Cardiac septum (tissue), 1 donor: ENCODE measurements at regions of chr1 and their contacts with region 1.

Region 1: GRCh38 chr1:204806943-204807687 is 63.5 kb upstream of the NFASC start:
- DNase-seq: peak; percentile 89

Region 2: GRCh38 chr1:204431310-204432165 is 375.6 kb before region 1 on chr1:
- intact Hi-C with region 1: loop called (anchors 10 kb)
- DNase-seq: peak; percentile 87

Region 3: DNA sequence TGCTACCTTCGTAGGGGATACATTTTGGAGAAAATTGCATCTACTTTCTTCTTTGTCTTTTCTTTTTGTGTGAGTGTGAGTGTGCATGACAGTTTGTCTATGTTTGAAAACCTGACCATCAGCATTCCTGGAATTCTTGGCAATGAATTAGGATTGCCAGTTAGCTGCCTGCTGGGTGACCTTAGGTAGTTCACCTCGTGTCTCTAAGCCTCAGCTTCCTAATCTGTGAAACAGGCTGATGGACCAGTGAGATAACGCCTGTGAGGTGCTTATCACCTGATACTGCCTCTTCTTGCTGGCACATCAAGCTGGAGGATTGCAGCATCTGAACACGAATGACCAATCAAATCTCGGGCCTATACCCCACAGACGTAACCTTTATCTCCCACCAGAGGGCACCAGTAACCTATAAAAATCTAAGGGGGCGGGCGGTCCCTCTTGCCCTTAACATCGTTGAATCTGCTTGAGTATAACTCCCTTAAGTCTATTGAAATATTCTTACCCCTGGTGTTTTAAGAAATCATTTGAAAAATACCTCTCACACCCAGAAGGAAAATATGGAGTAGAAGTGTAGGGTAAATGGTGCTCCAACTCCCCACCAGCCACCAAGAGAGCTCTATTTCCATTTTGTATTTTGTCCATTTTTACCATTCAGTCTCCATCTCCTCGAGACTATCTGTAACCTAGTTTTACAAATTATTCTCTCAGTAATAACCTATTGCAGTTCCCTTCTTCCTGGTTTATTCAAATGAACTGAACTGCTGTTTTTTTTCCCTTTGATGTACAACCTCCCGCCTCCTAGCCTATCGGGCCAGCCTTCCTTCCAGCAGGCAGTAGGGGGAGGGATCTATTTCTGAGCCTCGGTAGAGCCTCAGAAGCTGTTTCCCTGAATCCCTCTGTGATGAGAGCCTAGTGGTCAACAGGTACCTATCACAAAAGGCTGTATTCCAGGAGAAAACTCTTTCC is 241.2 kb before region 1 on chr1:
- intact Hi-C with region 1: loop called (anchors 1 kb)
- DNase-seq: no peak

Region 4: DNA sequence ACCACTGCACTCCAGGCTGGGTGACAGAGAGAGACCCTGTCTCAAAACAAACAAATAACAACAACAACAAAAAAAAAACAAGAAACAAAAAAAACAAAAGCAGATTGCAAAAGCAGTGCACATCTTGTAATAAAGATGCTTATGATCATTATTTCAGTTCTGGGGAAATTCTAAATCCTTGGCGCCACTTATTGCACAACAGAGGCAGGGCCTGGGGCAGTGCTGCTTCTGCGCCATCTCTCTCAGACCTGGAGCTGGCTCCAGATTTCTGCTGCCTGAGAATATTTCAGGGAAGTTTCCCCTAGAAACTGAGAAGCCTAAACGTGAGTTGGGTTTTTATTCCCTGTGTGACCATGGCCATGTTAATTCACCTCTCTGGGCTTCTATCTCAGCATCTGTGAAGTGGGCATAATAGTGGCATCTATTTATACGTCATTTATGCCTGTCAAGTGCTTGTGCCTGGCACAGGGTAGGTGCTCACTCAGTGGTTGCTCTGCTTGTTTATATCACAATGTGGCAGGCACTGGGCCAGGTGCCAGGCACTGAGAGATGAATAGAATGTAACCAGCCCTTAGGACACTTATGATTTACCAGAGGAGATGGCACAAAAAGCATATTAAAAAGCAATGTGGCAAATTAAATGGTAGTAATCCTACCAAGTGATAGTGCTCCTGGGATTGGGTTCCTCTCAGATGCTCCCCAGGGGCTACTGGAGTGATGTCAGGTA is 223.0 kb before region 1 on chr1:
- intact Hi-C with region 1: loop called (anchors 5 kb)
- DNase-seq: no peak

Region 5: DNA sequence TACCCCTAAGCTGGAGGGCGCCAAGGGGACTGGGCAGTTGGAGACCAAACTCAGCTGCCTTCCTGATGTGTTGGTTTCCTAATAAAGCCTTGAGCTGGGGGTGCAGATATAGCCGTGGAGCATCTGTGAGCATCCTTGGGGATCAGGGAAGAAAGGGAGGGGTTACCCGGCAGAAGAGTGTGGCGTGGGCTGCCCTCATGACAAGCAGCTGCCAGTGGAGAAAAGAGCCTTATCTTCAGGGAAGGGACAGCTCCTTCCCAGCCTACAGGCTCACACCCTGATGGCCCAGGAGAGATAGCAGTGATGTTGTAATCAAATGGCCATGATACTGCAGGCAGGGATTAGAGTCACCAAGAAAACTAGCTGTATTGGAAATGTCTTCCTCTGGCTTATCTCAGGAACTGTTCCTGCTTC is 52.8 kb after region 1 on chr1:
- intact Hi-C with region 1: loop called (anchors 5 kb)
- DNase-seq: no peak

Region 6: GRCh38 chr1:204941421-204942338 is 134.6 kb after region 1 on chr1:
- intact Hi-C with region 1: loop called (anchors 1 kb)
- DNase-seq: peak; percentile 81

Region 7: DNA sequence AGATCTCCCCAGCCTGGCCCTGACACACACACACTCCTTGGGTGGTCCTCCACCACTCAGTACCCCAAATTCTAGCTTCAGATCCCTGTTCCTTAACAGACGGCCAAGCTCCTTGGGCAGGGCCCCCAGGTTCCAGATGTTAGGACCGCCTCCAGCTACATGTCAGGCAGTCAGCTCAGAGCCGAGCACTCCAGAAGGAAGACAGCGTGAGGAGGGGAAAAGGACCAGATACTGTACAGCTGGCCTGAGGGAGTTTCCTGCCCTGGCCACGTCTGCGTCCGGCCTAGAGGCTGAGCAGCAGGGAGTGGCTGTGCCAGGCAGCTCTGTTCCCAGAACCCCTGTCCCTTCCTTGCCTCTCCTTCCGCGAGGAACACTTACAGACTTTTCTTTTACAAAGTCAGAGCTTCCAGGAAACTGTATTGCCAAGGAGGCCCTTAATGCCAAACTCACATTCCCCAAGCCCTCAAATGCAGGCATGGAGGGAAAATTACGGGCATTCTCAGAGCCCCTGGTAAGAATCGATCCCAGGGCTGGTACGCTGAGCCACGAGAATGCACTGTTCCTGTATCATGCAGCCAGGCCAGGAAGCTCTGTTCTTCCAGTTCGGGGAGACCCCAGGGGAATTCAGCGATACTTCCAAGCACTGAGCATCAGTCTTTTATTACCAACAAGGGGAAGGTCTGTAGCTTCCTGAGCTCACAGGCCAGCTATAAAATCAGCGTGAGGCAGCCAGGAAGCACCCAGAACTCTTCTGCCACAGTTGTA is 190.7 kb after region 1 on chr1:
- intact Hi-C with region 1: no loop called
- DNase-seq: no peak

Region 8: GRCh38 chr1:205061665-205062069 is 254.6 kb after region 1 on chr1:
- intact Hi-C with region 1: loop called (anchors 10 kb)
- DNase-seq: peak; percentile 88